ENCODE measurements at regions of chr11 and their contacts with region 1.

Region 1: DNA sequence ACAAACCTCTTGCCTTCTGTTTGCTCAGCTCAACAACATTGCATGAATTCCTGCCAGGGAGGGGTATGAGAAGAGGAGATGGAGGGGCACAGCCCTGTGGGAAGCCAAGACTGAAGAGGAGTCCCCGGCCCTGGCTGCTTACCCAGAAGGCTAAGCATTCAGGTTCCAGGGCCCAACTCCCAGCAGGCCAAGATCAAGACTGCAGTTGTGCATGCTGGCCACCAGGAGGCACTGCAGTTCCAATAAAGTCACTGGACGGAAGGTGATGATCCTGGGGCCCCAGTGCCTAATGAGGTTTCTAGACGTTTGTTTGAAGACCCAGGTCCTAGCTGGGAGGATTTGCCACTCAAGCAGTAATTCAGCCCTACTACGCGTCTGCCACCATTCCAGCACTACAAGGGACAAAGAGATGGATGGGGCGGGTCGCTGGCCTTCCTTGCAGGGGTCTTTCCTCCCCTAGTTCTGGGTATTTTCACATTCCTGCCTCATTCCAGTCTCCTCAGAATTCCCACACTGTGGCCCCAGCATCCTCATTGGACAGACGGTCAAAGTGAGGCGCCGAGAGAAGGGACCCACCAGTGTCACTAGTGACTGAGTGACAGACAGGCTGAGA is 23.6 kb downstream of the ALX4 start:
- DNase-seq: peak; percentile 35
- ATAC-seq: peak; percentile 84
- H3K4me3 ChIP-seq: no peak overlapping the region
- H3K27ac ChIP-seq: no peak overlapping the region
- H3K4me1 ChIP-seq: peaks cover 7% of the 10 kb centered on the region; the same call in 1 of the 2 replicates
- H3K27me3 ChIP-seq: peaks cover 2 to 4% of the 10 kb centered on the region in 2 experiments; a peak in 3 of 5 replicates
- CTCF ChIP-seq: peak; percentile 93
- EP300 ChIP-seq: no peak
- POLR2A ChIP-seq: no peak
- RAD21 ChIP-seq: peak; percentile 80

Region 2: GRCh38 chr11:44464741-44465140 is 178.4 kb after region 1 on chr11:
- CTCF ChIA-PET with region 1: interaction called, 3 read pairs
- POLR2A ChIA-PET with region 1: no interaction called
- in situ Hi-C with region 1: no loop called
- intact Hi-C with region 1: loop called (anchors 5 kb)
- DNase-seq: peak; percentile 18
- ATAC-seq: no peak
- H3K4me3 ChIP-seq: no peak overlapping the region
- H3K27ac ChIP-seq: no peak overlapping the region
- H3K4me1 ChIP-seq: no peaks in the 10 kb centered on the region
- H3K27me3 ChIP-seq: no peaks in the 10 kb centered on the region
- CTCF ChIP-seq: peak; percentile 23; the same call in 1 of the 2 replicates
- EP300 ChIP-seq: no peak
- POLR2A ChIP-seq: no peak
- RAD21 ChIP-seq: no peak

Region 3: GRCh38 chr11:44483919-44484610 is 197.7 kb after region 1 on chr11:
- CTCF ChIA-PET with region 1: interaction called, 3 read pairs
- POLR2A ChIA-PET with region 1: no interaction called
- in situ Hi-C with region 1: no loop called
- intact Hi-C with region 1: loop called (anchors 1 kb)
- DNase-seq: peak; percentile 16
- ATAC-seq: peak; percentile 86
- H3K4me3 ChIP-seq: no peak overlapping the region
- H3K27ac ChIP-seq: no peak overlapping the region
- H3K4me1 ChIP-seq: no peaks in the 10 kb centered on the region
- H3K27me3 ChIP-seq: peaks cover 0 to 4% of the 10 kb centered on the region in 2 experiments; a peak in 3 of 5 replicates
- CTCF ChIP-seq: peak; percentile 54
- EP300 ChIP-seq: no peak
- POLR2A ChIP-seq: no peak
- RAD21 ChIP-seq: no peak